ENCODE measurements at regions of chr15 and their contacts with region 1.

Region 1: DNA sequence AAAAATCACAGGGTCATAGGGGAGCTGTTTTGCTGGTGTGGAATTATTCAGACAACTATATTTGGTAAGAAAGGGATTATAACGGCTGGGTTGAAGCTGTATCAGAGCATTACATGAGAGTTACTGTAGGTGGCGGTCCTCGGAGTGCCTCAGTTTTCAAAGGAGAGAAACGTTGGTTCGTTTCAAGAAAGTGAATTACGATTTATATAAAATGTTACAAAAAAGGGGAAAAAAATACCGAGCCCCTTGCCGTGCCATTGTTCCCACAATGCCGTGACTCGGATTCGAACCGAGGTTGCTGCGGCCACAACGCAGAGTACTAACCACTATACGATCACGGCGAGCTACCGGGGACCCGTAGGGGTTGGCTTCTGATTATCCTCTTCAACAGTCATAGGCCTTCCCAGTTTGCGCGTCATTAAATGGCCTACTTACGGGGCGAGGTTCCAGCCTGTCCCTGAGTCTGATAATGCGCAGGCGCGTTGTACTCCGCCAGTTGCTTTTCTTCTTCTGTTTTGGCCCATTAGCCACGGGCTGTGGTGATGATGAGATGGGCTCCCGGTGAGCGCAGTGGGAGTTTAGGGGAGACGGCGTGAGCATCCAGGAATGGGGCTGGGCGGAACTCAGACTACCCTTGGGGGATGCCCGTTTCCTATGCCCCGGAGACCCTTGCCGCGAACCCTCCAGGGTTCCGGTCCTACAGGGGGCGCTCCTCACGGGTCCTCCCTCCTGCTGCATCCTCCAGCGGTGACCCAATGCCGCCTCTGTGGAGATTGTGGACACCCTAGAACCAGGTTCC is 10.8 kb upstream of the SHF start:
- DNase-seq: peak; percentile 95
- H3K4me3 ChIP-seq: peak overlapping the region; percentile 85
- H3K27ac ChIP-seq: peak overlapping the region; percentile 76
- H3K4me1 ChIP-seq: peaks cover 31% of the 10 kb centered on the region
- CTCF ChIP-seq: peak; percentile 85

Region 2: GRCh38 chr15:45166834-45167630 is 31.5 kb before region 1 on chr15:
- CTCF ChIA-PET with region 1: interaction called, 3 read pairs
- POLR2A ChIA-PET with region 1: interaction called, 5 read pairs
- intact Hi-C with region 1: loop called (anchors 1 kb)
- DNase-seq: peak; percentile 91
- H3K4me3 ChIP-seq: peak overlapping the region; percentile 73
- H3K27ac ChIP-seq: peak overlapping the region; percentile 80
- H3K4me1 ChIP-seq: peaks cover 39% of the 10 kb centered on the region
- CTCF ChIP-seq: peak; percentile 78

Region 3: DNA sequence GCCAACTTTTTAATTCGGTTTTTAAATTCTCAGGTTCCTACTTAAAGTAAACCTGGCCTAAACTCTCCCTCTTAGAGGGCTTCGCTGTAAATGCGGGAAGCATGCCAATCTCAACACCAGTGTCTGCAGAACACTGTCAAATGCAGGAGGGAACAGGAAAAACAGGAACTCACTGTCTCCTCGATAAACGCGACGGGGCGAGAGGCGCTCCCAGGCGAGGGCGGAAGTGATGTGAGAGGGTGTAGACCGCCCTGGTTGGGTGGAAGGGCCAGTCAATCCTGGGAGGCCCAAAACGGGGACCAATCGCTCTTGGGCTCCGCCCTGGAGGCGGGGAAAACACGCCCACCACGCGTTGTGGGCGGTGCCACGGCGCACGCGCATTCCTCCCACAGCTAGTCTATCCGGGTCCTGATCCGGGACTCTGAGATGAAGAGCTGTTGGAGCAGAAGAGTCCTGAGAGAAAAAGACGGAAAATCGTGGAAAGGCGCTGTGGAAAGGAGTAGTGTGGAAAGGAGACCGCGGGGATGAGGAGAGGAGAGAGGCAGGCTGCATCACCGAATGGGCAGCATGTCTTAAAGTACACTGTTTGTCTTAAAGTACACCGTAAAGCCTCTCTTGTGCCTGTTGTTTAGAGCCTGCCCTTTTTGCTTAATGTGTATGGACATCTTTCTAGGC is 80.6 kb after region 1 on chr15:
- CTCF ChIA-PET with region 1: no interaction called
- POLR2A ChIA-PET with region 1: interaction called, 3 read pairs
- intact Hi-C with region 1: loop called (anchors 2 kb)
- DNase-seq: peak; percentile 97
- H3K4me3 ChIP-seq: peak overlapping the region; percentile 78
- H3K27ac ChIP-seq: peak overlapping the region; percentile 18
- H3K4me1 ChIP-seq: peaks cover 13% of the 10 kb centered on the region
- CTCF ChIP-seq: no peak

Region 4: GRCh38 chr15:46442184-46442583 is 1243.6 kb after region 1 on chr15:
- CTCF ChIA-PET with region 1: no interaction called
- POLR2A ChIA-PET with region 1: no interaction called
- intact Hi-C with region 1: no loop called
- DNase-seq: no peak
- H3K4me3 ChIP-seq: no peak overlapping the region
- H3K27ac ChIP-seq: no peak overlapping the region
- H3K4me1 ChIP-seq: no peaks in the 10 kb centered on the region
- CTCF ChIP-seq: no peak

Measured in OCI-LY7 (cell line).